ENCODE measurements at regions of chr19 and their contacts with region 1.

Region 1: GRCh38 chr19:48646001-48646721 is at the start of gene CA11:
- DNase-seq: peak in 1 of 2 donors; percentile 94
- H3K4me3 ChIP-seq: peak within 1 kb of the TSS; percentile 56 to 64
- H3K27ac ChIP-seq: peak within 1 kb of the TSS; percentile 96
- H3K4me1 ChIP-seq: peaks cover 16% of the 10 kb centered on the region
- H3K27me3 ChIP-seq: no peaks in the 10 kb centered on the region
- CTCF ChIP-seq: peak; percentile 77 to 86 (median 82)
- POLR2A ChIP-seq: peak in 1 of 2 donors; percentile 39
- total RNA-seq, gene CA11: 7.9 TPM

Region 2: DNA sequence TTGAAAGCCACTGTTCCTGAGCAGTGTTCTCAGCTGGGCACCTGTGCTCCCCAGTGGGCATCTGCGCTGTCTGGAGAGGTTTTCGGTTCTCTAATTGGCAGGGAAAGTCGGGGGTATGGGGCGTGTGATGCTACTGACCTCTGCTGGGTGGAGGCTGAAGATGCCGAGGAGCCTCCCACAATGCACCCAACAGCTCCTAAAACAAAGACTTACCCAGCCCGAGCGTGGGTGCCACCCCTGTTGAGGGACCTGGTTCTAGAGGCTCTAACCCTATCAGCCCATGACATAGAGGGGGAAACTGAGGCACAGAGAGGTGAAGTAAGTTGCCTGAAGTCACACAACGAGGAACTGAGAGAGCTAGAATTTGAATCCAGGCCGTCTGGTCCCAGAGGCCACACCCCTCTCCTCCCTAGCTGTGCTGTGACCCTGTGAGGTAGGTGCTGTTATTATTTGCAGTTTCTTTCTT is 37.3 kb before region 1 on chr19:
- intact Hi-C with region 1: no loop called
- DNase-seq: no peak
- H3K4me3 ChIP-seq: no peak overlapping the region
- H3K27ac ChIP-seq: no peak overlapping the region
- H3K4me1 ChIP-seq: no peaks in the 10 kb centered on the region
- H3K27me3 ChIP-seq: no peaks in the 10 kb centered on the region
- CTCF ChIP-seq: no peak
- POLR2A ChIP-seq: no peak

Region 3: DNA sequence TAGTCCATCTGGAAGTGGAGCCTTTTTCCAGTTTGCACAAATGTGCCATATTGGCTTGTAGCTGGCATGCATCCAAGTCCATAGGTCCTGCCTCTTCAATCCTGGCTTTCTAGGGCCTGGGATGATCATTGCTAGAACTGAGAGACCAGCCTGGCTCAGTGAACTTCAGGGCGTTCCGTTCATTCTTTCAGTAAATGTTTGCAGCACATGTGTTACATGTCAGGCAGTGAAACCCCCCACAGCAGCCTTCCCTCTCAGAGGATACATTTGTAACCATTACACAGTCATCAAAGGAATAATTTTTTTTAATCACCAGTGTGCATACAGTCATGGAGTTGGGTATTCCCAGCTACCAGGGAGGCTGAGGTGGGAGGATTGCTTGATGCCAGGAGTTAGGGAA is 59.3 kb after region 1 on chr19:
- intact Hi-C with region 1: loop called (anchors 5 kb)
- DNase-seq: no peak
- H3K4me3 ChIP-seq: no peak overlapping the region
- H3K27ac ChIP-seq: no peak overlapping the region
- H3K4me1 ChIP-seq: no peaks in the 10 kb centered on the region
- H3K27me3 ChIP-seq: no peaks in the 10 kb centered on the region
- CTCF ChIP-seq: no peak
- POLR2A ChIP-seq: no peak

Region 4: GRCh38 chr19:48780631-48781391 is 134.7 kb after region 1 on chr19:
- intact Hi-C with region 1: loop called (anchors 5 kb)
- DNase-seq: no peak
- H3K4me3 ChIP-seq: no peak overlapping the region
- H3K27ac ChIP-seq: peak overlapping the region; percentile 57
- H3K4me1 ChIP-seq: peaks cover 22% of the 10 kb centered on the region
- H3K27me3 ChIP-seq: no peaks in the 10 kb centered on the region
- CTCF ChIP-seq: no peak
- POLR2A ChIP-seq: no peak

Measured in vagina (tissue), 2 donors.